A549 (cell line): ENCODE measurements at regions of chr6 and their contacts with region 1.

Region 1: DNA sequence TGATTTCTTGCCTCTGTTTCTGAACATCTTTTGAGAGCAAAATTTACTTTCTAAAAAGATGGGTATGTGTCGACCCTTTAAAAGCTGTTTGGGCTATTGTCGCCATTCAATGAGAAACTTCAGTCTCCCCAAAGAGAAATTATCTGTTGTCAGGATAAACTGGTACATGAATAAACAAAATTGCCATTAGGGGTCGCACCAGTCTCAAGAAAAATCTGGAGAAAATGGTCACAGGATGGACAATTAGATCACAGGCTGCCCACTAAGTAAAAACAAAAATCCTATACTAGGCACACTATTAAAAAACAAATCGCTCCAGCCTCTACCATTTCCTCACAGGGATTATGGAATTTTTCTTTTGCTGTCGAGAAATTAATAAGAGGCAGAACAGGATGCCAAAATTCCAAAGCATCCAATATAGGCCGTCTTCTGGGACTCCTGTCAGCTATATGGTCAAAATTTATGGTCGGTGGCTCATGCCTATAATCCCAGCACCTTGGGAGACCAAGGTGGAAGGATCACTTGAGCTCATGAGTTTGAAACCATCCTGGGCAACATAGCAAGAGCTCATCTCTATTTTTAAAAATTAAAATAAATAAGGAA is 5.5 kb upstream of the HLA-E start:
- DNase-seq: peak in 1 of 2 experiments; percentile 61
- ATAC-seq: no peak
- H3K4me3 ChIP-seq: no peak overlapping the region
- H3K27ac ChIP-seq: no peak overlapping the region
- H3K4me1 ChIP-seq: peaks cover 14% of the 10 kb centered on the region; the same call in 1 of the 3 replicates
- CTCF ChIP-seq: peak; percentile 62
- EP300 ChIP-seq: no peak
- POLR2A ChIP-seq: no peak
- RAD21 ChIP-seq: peak; percentile 68

Region 2: DNA sequence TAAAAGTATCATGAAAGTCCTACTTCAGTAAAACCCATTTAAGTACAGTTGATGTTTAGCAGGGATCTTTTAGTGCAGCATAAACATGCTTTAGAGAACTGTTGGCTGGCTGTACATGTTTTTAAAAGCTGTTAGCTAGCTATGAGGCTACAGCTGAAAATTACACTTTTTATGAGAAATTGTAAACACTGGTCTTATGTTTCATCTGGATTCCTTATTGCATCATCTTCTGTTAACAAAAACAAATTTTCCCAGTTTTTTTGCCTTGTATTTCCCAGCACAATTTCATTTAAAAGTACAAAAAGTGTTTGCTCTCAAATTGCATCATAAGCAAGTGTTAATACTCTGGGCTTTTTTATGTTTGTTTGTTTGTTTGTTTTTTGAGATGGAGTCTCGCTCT is 12.8 kb before region 1 on chr6:
- CTCF ChIA-PET with region 1: interaction called, 24 read pairs
- POLR2A ChIA-PET with region 1: no interaction called
- DNase-seq: no peak
- ATAC-seq: no peak
- H3K4me3 ChIP-seq: no peak overlapping the region
- H3K27ac ChIP-seq: no peak overlapping the region
- H3K4me1 ChIP-seq: peaks cover 6% of the 10 kb centered on the region; the same call in 1 of the 3 replicates
- CTCF ChIP-seq: no peak
- EP300 ChIP-seq: no peak
- POLR2A ChIP-seq: no peak
- RAD21 ChIP-seq: no peak

Region 3: GRCh38 chr6:30520522-30520921 is 36.7 kb after region 1 on chr6:
- CTCF ChIA-PET with region 1: interaction called, 117 read pairs
- POLR2A ChIA-PET with region 1: no interaction called
- DNase-seq: no peak
- ATAC-seq: no peak
- H3K4me3 ChIP-seq: no peak overlapping the region
- H3K27ac ChIP-seq: no peak overlapping the region; a peak in 1 of 6 replicates
- H3K4me1 ChIP-seq: no peaks in the 10 kb centered on the region
- CTCF ChIP-seq: no peak
- EP300 ChIP-seq: no peak
- POLR2A ChIP-seq: no peak
- RAD21 ChIP-seq: no peak

Region 4: DNA sequence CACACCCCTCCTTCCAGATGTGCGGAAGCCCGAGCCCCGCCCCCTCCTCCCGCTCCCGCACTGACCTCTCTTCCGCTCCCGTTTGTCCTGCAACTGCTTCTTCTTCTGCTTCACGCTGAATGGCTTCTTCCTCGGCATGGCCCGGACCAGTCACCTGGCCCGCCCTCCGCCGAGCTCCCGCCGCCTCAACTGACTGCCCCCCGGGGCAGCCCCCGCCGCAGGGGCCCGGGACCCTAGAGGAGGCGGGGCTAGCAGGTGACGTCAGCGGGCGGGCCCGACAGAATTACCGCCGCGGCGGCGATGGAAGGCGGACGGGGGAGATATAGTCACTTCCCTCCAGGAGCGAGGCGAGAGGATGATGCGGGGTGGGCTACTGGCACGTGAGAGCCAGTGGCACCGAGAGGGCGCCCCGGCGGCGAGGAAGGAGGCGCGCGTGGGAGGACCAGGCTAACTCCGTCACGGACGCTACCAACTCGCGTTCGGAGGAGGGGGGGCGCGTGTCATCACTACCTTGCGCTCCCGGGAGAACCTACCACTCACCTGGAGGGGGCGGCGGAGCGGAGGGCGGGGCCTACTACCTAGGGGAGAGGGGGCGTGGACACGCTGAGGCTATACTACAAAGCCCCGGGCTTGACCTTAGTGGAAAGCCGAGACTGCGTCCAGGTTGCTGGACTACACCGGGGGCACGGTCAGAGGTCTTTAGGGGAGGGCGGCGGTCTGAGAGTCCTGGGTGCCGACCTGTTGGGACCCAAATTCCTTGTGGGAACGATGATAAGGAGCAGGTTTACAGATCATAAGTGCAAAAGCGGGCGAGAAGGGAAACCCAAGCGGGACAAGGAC is 72.5 kb after region 1 on chr6 and contains the start of gene GNL1:
- CTCF ChIA-PET with region 1: interaction called, 25 read pairs
- POLR2A ChIA-PET with region 1: no interaction called
- DNase-seq: peak; percentile 80 to 95
- ATAC-seq: peak; percentile 82 to 91
- H3K4me3 ChIP-seq: peak within 1 kb of the TSS; percentile 88
- H3K27ac ChIP-seq: peak within 1 kb of the TSS; percentile 91 to 94
- H3K4me1 ChIP-seq: peaks cover 13% of the 10 kb centered on the region; the same call in 2 of the 3 replicates
- CTCF ChIP-seq: no peak
- EP300 ChIP-seq: no peak
- POLR2A ChIP-seq: no peak
- RAD21 ChIP-seq: no peak
- polyA plus RNA-seq, gene GNL1: 18.5 and 25.6 TPM in 2 replicates